ENCODE measurements at regions of chr1 and their contacts with region 1.

Region 1: GRCh38 chr1:19096036-19096833 is 113.8 kb downstream of the UBR4 start:
- DNase-seq: peak; percentile 56 to 71
- ATAC-seq: peak; percentile 93 to 94
- H3K4me3 ChIP-seq: no peak overlapping the region
- H3K27ac ChIP-seq: peak overlapping the region; percentile 4 to 71; a peak in 5 of 6 replicates
- H3K4me1 ChIP-seq: peaks cover 15% of the 10 kb centered on the region
- CTCF ChIP-seq: peak; percentile 69
- EP300 ChIP-seq: no peak
- POLR2A ChIP-seq: no peak
- RAD21 ChIP-seq: peak; percentile 88 to 90

Region 2: GRCh38 chr1:18902523-18903290 is 193.5 kb before region 1 on chr1 and contains the start of gene ALDH4A1:
- CTCF ChIA-PET with region 1: interaction called, 319 read pairs
- POLR2A ChIA-PET with region 1: no interaction called
- DNase-seq: peak; percentile 96 to 99
- ATAC-seq: peak; percentile 91 to 97
- H3K4me3 ChIP-seq: peak within 1 kb of the TSS; percentile 97
- H3K27ac ChIP-seq: peak within 1 kb of the TSS; percentile 86 to 91
- H3K4me1 ChIP-seq: peaks cover 35% of the 10 kb centered on the region
- CTCF ChIP-seq: no peak
- EP300 ChIP-seq: no peak
- POLR2A ChIP-seq: peak; percentile 31
- RAD21 ChIP-seq: no peak
- polyA plus RNA-seq, gene ALDH4A1: 9.4 and 9.7 TPM in 2 replicates

Region 3: DNA sequence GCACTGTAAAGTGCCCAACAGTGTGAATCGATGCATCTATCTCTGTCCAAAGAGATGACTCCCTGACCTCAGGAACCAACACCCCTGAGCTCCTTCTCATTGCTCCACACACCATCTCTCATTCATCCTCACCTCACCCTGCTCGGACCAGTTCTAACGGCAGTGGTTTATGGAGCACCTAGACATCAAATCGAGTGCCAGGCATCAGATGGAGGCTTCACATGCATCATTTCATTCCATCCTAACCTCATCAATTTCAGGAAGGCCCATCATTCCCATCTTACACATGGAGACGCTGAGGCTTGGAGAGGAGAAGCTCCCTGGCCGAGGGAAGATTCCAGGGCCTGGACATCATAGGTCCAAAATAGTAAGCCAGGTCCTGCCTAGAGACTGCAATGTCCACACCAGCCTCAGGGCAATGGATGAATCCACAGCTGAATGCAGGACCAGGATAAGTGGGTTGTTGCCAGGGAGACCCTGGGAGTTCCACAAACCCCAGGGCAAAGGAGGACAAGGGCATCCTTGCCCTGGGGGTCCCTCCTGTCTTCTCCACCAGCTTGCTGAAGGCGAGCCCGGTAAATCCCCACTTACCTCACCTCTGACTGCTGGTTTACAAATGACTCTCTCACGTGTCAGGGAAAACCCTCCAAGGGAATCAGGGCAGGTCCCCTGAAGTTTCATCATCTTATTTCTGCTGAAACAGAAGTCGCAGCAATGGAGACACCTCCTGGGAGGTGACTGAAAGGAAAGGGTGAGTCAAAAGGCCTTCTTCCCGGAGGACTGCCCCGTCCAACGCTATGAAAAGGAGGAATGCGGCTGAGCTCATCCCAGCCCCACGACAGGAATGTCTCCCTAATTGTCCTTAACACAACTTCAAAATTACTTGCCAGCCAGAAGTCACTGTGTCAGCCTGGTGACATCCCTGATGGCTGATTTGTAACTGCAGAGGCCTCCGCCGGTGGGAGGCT is 130.7 kb before region 1 on chr1:
- CTCF ChIA-PET with region 1: interaction called, 14 read pairs
- POLR2A ChIA-PET with region 1: no interaction called
- DNase-seq: peak in 1 of 2 experiments; percentile 56
- ATAC-seq: peak; percentile 56 to 58; a peak in 4 of 6 replicates
- H3K4me3 ChIP-seq: no peak overlapping the region
- H3K27ac ChIP-seq: peak overlapping the region; percentile 15 to 76; a peak in 5 of 6 replicates
- H3K4me1 ChIP-seq: peaks cover 35% of the 10 kb centered on the region
- CTCF ChIP-seq: no peak
- EP300 ChIP-seq: no peak
- POLR2A ChIP-seq: no peak
- RAD21 ChIP-seq: no peak

Region 4: GRCh38 chr1:19033861-19034680 is 62.2 kb before region 1 on chr1:
- CTCF ChIA-PET with region 1: no interaction called
- POLR2A ChIA-PET with region 1: no interaction called
- DNase-seq: no peak
- ATAC-seq: no peak; a peak in 1 of 6 replicates
- H3K4me3 ChIP-seq: no peak overlapping the region
- H3K27ac ChIP-seq: peak overlapping the region; percentile 2 to 75; a peak in 4 of 6 replicates
- H3K4me1 ChIP-seq: peaks cover 9% of the 10 kb centered on the region
- CTCF ChIP-seq: no peak
- EP300 ChIP-seq: no peak
- POLR2A ChIP-seq: no peak
- RAD21 ChIP-seq: no peak

Region 5: DNA sequence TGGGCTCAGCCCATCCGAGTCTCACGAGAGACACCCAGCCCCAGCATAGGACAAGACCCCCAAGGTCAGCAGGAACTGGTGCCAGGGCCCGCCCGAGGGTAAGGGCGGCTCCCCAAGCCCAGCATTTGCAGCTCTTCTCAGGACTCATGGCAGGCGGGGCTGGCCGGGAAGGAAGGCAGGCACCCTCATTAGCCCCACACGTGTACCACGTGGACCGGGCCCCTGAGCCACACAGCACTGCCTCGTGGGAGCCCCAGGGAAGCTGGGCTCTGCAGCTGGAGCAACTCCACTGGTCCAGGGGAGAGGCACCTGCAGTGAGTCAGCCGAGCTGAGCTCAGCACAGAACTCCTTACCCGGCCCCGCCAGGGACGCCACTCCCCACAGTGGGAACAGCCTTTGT is 42.0 kb before region 1 on chr1:
- CTCF ChIA-PET with region 1: no interaction called
- POLR2A ChIA-PET with region 1: no interaction called
- DNase-seq: no peak
- ATAC-seq: no peak
- H3K4me3 ChIP-seq: no peak overlapping the region
- H3K27ac ChIP-seq: peak overlapping the region in 1 of 2 experiments; percentile 47; a peak in 2 of 6 replicates
- H3K4me1 ChIP-seq: peaks cover 11% of the 10 kb centered on the region; the same call in 2 of the 3 replicates
- CTCF ChIP-seq: no peak
- EP300 ChIP-seq: no peak
- POLR2A ChIP-seq: no peak
- RAD21 ChIP-seq: no peak

Region 6: DNA sequence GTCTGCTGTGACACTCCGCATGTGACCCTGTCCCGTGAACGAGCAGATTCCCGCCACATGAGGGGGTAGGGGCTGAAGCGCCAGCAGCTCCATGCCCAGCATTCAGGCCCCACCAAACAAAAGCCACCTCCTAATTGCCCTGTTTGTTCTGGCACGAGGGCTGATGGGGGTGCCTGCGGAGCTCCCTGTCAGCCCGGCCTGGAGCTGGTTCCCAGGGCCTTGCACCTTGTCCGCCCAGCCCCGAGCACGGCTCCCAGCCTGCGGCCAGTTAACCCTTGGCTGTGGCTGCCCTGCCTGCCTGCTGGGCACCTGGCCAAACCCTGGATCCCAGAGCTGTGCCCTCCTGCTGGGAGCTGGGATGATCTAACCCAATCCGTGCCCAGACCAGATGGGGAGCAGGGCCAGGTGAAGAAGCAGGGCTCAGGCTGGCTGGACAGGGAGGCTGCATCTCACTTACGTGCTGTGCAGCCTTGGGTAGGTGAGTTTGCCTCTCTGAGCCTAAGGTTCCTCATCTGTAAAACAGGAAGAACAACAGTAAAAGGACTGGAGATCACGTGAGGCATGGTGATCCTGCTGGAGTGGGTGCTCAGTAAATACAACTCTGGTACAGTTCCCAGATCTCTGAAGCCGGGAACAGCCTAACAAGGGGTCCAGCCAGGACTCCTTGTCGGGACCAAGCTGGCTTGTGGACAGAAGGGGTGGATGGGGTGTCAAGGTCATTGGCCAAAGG is 28.9 kb before region 1 on chr1:
- CTCF ChIA-PET with region 1: interaction called, 10 read pairs
- POLR2A ChIA-PET with region 1: no interaction called
- DNase-seq: peak in 1 of 2 experiments; percentile 37
- ATAC-seq: peak in 1 of 2 experiments; percentile 28; a peak in 3 of 6 replicates
- H3K4me3 ChIP-seq: no peak overlapping the region
- H3K27ac ChIP-seq: peak overlapping the region; percentile 80 to 89
- H3K4me1 ChIP-seq: peaks cover 34% of the 10 kb centered on the region
- CTCF ChIP-seq: no peak
- EP300 ChIP-seq: no peak
- POLR2A ChIP-seq: no peak
- RAD21 ChIP-seq: no peak

Region 7: DNA sequence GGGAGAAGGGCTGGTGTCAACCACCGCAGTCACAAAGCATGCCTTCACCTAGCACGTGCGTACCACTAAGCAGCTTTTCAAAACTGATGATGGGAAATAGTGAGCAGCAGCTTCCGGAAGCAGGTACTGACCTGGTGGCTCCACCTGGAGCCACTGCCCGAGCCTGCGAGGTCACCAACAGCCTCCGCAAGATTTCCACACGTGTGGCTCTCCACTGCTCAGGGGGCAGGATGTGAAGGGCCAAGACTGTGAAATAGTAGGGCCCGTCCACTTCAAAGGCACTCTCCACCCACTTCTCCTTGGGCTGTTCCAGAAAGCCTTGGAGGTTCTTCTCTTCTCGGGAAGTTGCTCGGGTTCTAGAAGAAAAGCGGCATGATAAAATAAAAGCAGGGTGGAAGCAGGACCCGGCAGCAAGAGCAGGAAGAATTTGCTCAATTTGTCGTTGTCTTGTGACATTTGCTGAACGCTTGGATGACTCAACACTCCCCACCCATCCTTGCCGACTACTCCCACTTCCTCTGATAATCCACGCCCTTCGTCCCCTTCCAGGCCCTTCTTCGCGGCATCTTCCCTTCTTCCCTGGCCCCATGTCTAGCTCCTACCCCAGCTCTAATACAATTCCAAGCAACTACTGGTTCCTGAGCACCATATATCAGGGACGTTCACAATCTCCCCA is 14.9 kb before region 1 on chr1:
- CTCF ChIA-PET with region 1: interaction called, 16 read pairs
- POLR2A ChIA-PET with region 1: no interaction called
- DNase-seq: peak; percentile 25 to 69
- ATAC-seq: peak; percentile 54 to 68; a peak in 4 of 6 replicates
- H3K4me3 ChIP-seq: peak overlapping the region; percentile 38
- H3K27ac ChIP-seq: peak overlapping the region; percentile 88 to 95
- H3K4me1 ChIP-seq: peaks cover 46% of the 10 kb centered on the region
- CTCF ChIP-seq: no peak
- EP300 ChIP-seq: no peak
- POLR2A ChIP-seq: no peak
- RAD21 ChIP-seq: no peak

Region 8: DNA sequence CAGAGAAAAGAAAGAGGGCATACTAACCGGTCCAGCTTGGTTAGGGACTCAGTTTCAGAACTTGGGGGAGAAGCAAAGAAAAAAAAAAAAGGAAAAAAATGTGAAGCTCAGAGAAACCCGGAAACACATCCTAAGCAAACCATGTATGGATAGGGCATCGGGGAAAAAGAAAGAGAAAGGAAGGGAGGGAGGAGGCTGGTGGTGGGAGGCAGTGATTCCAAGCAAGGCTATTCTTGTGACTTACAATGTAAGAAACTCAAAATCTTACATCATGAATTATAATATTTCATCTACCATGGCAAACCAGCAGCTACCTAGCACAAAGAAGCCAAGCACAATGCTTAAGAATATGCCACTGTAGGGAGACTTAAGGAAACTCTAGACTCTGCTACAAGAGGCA is 53.5 kb after region 1 on chr1:
- CTCF ChIA-PET with region 1: no interaction called
- POLR2A ChIA-PET with region 1: no interaction called
- DNase-seq: no peak
- ATAC-seq: no peak
- H3K4me3 ChIP-seq: no peak overlapping the region
- H3K27ac ChIP-seq: no peak overlapping the region
- H3K4me1 ChIP-seq: no peaks in the 10 kb centered on the region
- CTCF ChIP-seq: no peak
- EP300 ChIP-seq: no peak
- POLR2A ChIP-seq: no peak
- RAD21 ChIP-seq: no peak